Right ventricle myocardium superior (tissue), 1 donor: ENCODE measurements at regions of chr16 and their contacts with region 1.

Region 1: GRCh38 chr16:2023098-2023925 is 3.4 kb upstream of the NHERF2 start:
- DNase-seq: peak; percentile 97
- ATAC-seq: peak; percentile 91

Region 2: DNA sequence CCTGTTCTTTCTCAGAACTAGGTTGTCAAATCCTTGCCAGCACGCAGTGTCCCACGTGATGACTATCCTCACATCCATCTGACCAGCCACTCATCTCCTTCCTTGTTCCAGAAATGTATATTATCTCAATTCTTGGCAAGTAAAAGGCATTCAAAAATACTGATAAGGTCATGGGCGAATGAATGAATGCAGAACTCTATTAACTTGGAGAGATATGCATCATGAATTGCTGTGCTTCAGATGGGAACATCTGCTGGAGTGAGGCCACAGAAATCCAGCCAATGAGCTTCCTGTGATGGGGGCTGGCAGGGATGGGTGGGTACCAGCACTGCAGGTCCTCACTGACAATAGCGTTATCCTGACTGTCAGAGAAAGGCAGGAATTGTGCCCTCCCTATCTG is 177.3 kb before region 1 on chr16:
- intact Hi-C with region 1: no loop called
- DNase-seq: no peak
- ATAC-seq: no peak

Region 3: DNA sequence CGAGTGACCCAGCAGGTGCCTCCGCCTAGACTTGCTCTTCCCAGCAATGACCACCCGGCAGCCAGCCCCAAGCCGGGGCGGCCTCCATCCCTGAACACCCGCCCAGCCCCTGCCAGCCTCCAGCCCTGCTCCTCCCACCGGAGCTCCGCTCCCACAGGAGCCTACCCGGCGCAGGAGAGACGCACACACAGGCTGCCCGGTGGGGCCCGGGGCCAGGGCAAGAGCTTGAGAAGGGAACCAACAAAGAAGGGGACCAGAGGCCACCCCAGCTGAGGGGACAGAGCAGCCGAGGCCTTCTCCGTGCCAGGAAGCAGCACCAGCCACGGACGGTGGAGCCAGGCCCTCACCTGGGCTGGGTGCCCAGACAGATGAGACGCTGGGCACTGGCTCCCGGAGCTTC is 98.5 kb after region 1 on chr16:
- intact Hi-C with region 1: no loop called
- DNase-seq: peak; percentile 72
- ATAC-seq: peak; percentile 36

Region 4: DNA sequence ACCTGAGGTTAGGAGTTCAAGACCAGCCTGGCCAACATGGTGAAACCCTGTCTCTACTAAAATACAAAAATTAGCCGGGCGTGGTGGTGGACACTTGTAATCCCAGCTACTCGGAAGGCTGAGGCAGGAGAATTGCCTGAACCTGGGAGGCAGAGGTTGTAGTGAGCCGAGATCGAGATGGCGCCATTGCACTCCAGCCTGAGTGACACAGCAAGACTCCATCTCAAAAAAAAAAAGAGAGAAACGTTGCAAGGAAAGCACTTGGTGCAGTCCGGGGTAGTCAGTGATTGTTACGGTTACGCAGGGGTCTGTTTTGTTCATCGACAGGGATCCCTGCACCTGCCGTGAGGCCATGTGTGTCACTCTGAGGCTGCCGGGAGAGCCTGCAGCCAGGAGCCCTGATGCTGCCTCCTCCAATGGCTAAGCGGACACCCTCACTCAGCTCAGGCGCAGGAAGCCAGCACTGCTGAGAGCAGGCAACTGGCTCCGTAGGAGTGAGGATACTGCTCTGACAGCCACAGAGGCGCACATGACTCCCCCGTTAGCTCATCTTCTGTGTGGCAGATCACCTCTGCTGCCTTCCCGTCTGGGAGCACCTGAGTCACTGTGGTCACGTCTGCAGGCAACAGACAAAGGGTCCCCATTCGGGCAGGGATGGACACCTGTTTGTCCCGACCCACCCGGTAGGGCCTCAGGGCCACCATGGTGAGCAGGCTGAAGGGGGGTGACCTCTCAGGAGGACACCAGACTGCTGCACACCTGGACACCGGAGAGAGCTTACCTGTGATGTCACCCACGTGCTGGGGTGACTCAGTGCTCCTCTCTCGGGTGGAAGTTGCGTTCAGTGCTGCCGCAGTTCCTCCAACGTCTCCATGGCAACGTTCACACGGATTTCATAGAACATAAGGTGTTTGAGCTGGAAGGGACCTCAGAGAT is 119.9 kb after region 1 on chr16:
- intact Hi-C with region 1: loop called (anchors 2 kb)
- DNase-seq: no peak
- ATAC-seq: no peak